Activated CD4-positive, alpha-beta memory T cell treated with anti-CD3 and anti-CD28 coated beads for 36 hours (primary cell): ENCODE measurements at regions of chr5 and their contacts with region 1.

Region 1: DNA sequence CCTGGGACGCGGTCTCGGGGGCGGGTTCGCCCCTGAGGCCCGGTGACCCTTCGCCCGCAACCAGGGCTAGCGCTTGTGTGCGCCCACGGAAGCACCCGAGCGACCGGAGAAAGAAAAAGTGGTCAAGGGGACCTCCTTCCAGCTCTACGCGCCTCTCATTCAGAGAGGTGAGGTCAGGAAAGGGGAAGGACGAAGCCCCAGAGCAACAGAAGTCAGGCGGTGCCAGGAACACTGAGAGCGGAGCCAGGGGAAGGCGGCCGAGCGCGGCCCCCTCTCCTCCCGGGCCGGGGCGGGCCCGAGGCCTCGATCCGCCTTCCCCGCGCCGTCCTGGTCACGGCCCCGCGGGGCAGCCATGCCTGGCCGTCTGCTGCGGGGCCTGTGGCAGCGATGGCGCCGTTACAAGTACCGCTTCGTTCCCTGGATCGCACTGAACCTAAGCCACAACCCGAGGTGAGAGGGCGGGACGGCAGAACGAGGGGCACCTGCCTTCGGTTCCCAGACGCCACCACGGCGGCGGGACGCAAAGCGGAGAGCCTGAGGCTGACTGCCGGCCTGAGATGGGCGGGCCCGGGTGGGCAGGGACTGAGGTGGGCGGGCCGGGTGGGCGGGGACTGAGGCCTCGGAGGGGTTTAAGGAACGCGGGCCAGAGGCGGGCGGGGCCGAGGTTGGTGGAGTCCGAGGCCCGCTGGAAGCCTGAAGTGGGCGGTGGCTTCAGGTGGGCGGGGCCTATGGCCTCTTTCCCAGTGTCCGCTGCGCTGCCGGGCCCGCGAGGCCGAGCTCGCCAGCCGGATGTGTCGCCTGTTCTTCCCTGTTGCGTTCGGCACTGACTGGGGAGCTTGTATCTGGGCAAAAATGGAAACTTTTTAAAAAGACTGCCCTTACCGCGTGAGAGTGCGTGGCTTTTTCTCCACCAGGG is at the start of gene SETD9:
- DNase-seq: peak; percentile 97
- H3K4me3 Mint-ChIP-seq: peak within 1 kb of the TSS; percentile 77
- H3K27ac Mint-ChIP-seq: peak within 1 kb of the TSS; percentile 94
- H3K4me1 Mint-ChIP-seq: peaks cover 20% of the 10 kb centered on the region
- H3K27me3 Mint-ChIP-seq: no peaks in the 10 kb centered on the region
- total RNA-seq, gene SETD9: 5.1 to 7.4 TPM

Region 2: GRCh38 chr5:55645304-55645703 is 1264.2 kb before region 1 on chr5:
- CTCF ChIA-PET with region 1: no interaction called
- POLR2A ChIA-PET with region 1: no interaction called
- intact Hi-C with region 1: no loop called
- DNase-seq: no peak
- H3K4me3 Mint-ChIP-seq: no peak overlapping the region
- H3K27ac Mint-ChIP-seq: no peak overlapping the region
- H3K4me1 Mint-ChIP-seq: peaks cover 11% of the 10 kb centered on the region
- H3K27me3 Mint-ChIP-seq: no peaks in the 10 kb centered on the region

Region 3: GRCh38 chr5:56951946-56952691 is 42.6 kb after region 1 on chr5 and contains the start of gene MIER3:
- CTCF ChIA-PET with region 1: interaction called, 3 read pairs
- POLR2A ChIA-PET with region 1: interaction called, 13 read pairs
- intact Hi-C with region 1: loop called (anchors 1 kb)
- DNase-seq: peak; percentile 86
- H3K4me3 Mint-ChIP-seq: peak within 1 kb of the TSS; percentile 96
- H3K27ac Mint-ChIP-seq: peak within 1 kb of the TSS; percentile 69
- H3K4me1 Mint-ChIP-seq: peaks cover 15% of the 10 kb centered on the region
- H3K27me3 Mint-ChIP-seq: peaks cover 11% of the 10 kb centered on the region
- total RNA-seq, gene MIER3: 16.5 to 17.2 TPM

Region 4: GRCh38 chr5:57117596-57117995 is 208.0 kb after region 1 on chr5:
- CTCF ChIA-PET with region 1: no interaction called
- POLR2A ChIA-PET with region 1: no interaction called
- intact Hi-C with region 1: loop called (anchors 5 kb)
- DNase-seq: peak; percentile 75
- H3K4me3 Mint-ChIP-seq: no peak overlapping the region
- H3K27ac Mint-ChIP-seq: peak overlapping the region; percentile 54
- H3K4me1 Mint-ChIP-seq: peaks cover 15% of the 10 kb centered on the region
- H3K27me3 Mint-ChIP-seq: no peaks in the 10 kb centered on the region